GM10248 (cell line): ENCODE measurements at regions of chr13 and their contacts with region 1.

Region 1: GRCh38 chr13:52169839-52170238 is 10.4 kb upstream of the NEK3 start:
- DNase-seq: no peak
- CTCF ChIP-seq: no peak

Region 2: GRCh38 chr13:52159321-52160086 is 10.3 kb before region 1 on chr13 and contains the start of gene NEK3:
- CTCF ChIA-PET with region 1: interaction called, 33 read pairs
- POLR2A ChIA-PET with region 1: no interaction called
- DNase-seq: peak; percentile 69
- CTCF ChIP-seq: no peak